ENCODE measurements at regions of chr2 and their contacts with region 1.

Region 1: DNA sequence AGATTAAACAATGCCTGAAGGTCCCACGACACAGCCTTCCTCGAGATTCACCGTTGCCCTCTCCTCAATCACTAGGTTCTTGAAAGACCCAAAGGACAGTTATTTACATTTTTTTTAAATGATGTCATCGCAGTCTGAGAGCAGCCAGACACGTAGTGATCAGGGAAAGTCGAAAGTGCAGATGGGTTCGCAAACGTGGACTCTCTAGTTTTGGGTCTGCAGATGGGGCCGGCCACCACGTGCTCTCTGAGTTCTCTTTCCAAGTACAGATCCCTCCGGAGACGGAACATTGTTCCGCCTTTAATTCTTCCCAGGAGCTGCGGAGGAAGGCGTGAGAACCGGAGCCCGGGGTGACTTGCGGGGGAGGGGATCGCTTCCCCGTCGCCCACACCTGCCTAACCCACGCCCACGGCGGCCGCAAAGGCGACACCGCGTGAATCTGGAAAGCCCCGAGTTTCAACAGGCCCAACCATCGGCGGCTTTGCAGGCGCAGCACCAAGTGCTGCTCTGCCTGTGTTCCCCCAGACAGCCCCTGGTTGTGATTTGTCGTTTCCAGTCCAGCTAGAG is 54.3 kb downstream of the PKDCC start:
- DNase-seq: peak; percentile 84 to 99 (median 96)
- ATAC-seq: peak; percentile 74 to 81
- H3K4me3 Mint-ChIP-seq: peak overlapping the region; percentile 77 to 90 (median 85)
- H3K27ac Mint-ChIP-seq: peak overlapping the region in 1 of 10 donors; percentile 99
- H3K4me1 Mint-ChIP-seq: peaks cover 38 to 70% (median 45%) of the 10 kb centered on the region in 4 donors
- H3K27me3 Mint-ChIP-seq: no peaks in the 10 kb centered on the region

Region 2: DNA sequence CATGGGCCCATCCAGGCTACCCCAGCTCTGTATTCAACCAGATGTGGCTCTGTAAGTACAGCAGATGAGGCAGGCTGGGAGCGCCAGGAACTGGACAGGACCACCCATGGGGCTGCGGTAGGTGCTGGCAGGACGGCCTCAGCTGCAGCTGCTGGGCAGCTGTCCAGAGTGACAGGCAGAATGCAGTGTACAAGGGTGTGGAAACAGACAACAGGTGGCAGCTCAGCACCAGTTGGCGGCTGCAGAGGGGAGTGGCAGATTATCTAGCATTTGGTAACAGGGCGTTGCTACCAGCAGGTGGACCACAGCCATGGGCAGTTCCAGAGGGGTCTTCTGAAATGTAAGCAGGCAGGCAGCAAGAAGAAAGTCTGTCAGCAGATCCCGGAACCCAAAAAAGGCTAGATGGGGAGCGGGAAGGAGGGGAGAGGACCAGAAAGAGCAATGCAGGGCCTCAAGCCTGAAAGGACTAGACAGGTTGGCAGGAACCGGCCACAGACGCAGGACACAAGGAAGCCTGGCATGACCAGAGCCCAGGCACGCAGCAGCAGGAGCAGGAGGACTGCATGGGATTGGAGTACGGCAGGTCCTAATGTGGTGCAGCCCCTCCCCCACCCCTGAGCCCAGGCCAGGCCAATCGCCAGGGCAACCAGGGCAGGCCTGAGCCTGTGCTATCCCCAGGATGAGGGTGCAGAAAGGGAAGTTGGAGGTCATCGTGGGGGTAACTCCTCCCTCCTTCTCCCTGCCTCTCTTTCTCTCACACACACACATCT is 29.6 kb before region 1 on chr2:
- POLR2A ChIA-PET with region 1: no interaction called
- DNase-seq: no peak
- ATAC-seq: no peak
- H3K4me3 Mint-ChIP-seq: no peak overlapping the region
- H3K27ac Mint-ChIP-seq: no peak overlapping the region
- H3K4me1 Mint-ChIP-seq: no peaks in the 10 kb centered on the region
- H3K27me3 Mint-ChIP-seq: peaks cover 5 to 56% (median 31%) of the 10 kb centered on the region in 5 donors

Region 3: DNA sequence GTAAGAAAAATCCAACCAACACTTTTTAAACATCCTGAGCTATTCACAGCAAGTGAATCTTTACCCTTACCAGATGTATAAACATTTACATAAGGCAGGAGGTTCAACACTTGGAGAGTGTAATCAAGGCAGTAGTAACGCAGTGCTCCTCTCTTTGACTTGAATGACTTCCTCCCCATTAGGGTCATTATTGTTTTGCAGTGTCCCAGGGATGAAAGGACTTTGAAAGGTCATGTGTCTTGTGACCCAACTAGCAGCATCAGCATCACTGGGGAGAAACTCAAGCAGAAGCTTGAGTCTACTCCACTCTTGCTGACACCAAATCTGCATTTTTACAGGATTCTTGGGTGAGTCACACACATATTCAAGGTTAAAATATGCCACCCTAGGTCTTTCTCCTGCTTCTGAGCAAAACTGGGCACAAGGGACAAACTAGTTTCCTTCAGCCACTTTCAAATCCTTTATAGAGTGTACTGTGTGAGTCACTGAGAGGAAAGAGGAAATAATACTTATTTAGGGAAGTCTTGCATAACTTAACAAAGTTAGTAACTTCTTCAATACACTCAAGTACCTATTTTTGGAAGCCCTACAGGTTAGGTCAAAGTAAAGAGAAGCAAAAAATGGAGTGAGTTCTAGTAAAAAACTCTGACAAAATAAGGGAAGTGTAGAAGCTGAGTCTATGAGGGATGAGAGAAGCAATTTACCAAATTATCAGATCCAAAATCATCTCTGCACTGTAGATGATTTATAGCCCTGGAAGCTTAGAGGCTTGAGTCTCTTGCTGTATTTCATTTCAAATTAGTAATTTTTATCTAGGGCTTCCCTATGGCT is 16.0 kb after region 1 on chr2:
- POLR2A ChIA-PET with region 1: interaction called, 149 read pairs
- DNase-seq: no peak
- ATAC-seq: peak; percentile 33 to 83
- H3K4me3 Mint-ChIP-seq: peak overlapping the region in 6 of 10 donors; percentile 3 to 26 (median 10)
- H3K27ac Mint-ChIP-seq: peak overlapping the region in 8 of 10 donors; percentile 13 to 91 (median 75)
- H3K4me1 Mint-ChIP-seq: peaks cover 17 to 75% (median 50%) of the 10 kb centered on the region in 4 donors
- H3K27me3 Mint-ChIP-seq: no peaks in the 10 kb centered on the region

Region 4: GRCh38 chr2:42127425-42128424 is 25.6 kb after region 1 on chr2:
- POLR2A ChIA-PET with region 1: interaction called, 149 read pairs
- DNase-seq: peak in 5 of 10 donors; percentile 42 to 74 (median 73)
- ATAC-seq: peak; percentile 62 to 66
- H3K4me3 Mint-ChIP-seq: peak overlapping the region; percentile 43 to 88 (median 73)
- H3K27ac Mint-ChIP-seq: peak overlapping the region; percentile 91 to 96 (median 94)
- H3K4me1 Mint-ChIP-seq: peaks cover 50 to 96% (median 94%) of the 10 kb centered on the region in 4 donors
- H3K27me3 Mint-ChIP-seq: no peaks in the 10 kb centered on the region

Region 5: DNA sequence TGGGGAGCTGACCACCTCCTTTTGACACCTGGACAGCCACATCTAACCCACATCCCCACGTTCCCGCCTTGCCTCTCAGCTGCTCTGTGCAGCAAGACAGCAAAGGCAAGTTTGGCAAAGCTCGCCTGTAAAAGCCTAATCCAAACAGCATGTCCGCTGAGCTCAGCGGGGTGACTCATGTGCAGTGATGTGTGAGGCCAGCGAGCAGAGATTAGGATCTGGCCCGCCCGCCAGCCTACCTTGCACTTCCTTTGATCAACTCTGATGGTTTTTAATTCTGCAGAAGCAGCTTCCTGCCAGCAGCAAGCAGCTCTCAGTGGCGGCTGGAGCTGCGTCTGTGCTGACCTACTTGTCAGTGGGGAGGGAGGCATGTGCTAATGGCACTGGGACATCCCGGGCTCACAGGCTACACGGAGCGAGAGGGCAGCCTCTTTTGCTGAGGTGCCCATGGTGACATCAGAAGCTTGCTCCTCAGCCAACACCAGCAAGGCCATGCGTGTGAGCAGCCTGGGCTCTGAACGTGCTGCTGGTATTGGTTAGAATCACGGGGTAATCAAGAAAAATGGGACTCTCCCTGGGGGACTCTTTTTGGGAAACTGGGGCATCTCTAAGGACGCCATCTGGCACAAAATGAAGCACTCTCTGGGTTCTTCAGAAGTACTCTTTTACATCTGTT is 31.0 kb after region 1 on chr2:
- POLR2A ChIA-PET with region 1: interaction called, 149 read pairs
- DNase-seq: peak; percentile 67 to 94 (median 85)
- ATAC-seq: peak; percentile 87 to 91
- H3K4me3 Mint-ChIP-seq: peak overlapping the region; percentile 62 to 84 (median 75)
- H3K27ac Mint-ChIP-seq: peak overlapping the region; percentile 90 to 98 (median 96)
- H3K4me1 Mint-ChIP-seq: peaks cover 46 to 96% (median 91%) of the 10 kb centered on the region in 4 donors
- H3K27me3 Mint-ChIP-seq: no peaks in the 10 kb centered on the region

Region 6: GRCh38 chr2:42140501-42140900 is 38.4 kb after region 1 on chr2:
- POLR2A ChIA-PET with region 1: interaction called, 72 read pairs
- DNase-seq: no peak
- ATAC-seq: no peak
- H3K4me3 Mint-ChIP-seq: no peak overlapping the region
- H3K27ac Mint-ChIP-seq: peak overlapping the region in 2 of 10 donors; percentile 48 to 73
- H3K4me1 Mint-ChIP-seq: peaks cover 17 to 71% (median 65%) of the 10 kb centered on the region in 4 donors
- H3K27me3 Mint-ChIP-seq: no peaks in the 10 kb centered on the region

Region 7: DNA sequence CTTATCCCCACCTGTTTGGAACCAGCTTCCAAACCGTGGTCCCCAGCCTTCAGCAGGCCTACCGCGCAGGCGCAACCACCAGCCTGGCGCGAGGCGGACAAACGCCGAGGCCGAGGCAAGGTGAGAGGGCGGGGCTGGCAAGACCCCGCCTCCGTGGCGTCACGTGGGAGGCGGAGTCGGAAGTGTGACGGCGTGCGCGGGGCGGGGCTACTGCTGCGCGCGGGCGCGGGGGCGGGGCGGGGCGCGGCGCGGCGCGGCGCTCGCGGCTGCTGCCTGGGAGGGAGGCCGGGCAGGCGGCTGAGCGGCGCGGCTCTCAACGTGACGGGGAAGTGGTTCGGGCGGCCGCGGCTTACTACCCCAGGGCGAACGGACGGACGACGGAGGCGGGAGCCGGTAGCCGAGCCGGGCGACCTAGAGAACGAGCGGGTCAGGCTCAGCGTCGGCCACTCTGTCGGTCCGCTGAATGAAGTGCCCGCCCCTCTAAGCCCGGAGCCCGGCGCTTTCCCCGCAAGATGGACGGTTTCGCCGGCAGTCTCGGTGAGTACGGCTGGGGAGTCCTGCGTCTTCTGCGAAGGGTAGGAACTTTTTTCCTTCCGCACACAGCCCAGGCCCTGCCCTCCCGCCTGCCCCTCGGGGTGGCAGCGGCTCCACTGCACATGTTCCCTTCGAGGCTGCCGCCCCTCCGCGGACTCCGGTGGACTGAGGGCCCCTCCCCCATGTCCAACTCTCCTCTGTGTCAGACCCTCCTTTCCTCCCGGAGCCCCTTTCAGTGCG is 67.2 kb after region 1 on chr2 and contains the start of gene EML4:
- POLR2A ChIA-PET with region 1: interaction called, 39 read pairs
- DNase-seq: peak; percentile 79 to 95 (median 90)
- ATAC-seq: peak; percentile 87
- H3K4me3 Mint-ChIP-seq: peak within 1 kb of the TSS in 2 of 10 donors; percentile 53 to 70
- H3K27ac Mint-ChIP-seq: peak within 1 kb of the TSS in 2 of 10 donors; percentile 91
- H3K4me1 Mint-ChIP-seq: peaks cover 7 to 24% (median 15%) of the 10 kb centered on the region in 4 donors
- H3K27me3 Mint-ChIP-seq: no peaks in the 10 kb centered on the region
- polyA plus RNA-seq, gene EML4: 37.8 to 48.1 (median 44.7) TPM

Region 8: GRCh38 chr2:42186221-42186765 is 84.2 kb after region 1 on chr2:
- POLR2A ChIA-PET with region 1: interaction called, 11 read pairs
- DNase-seq: no peak
- ATAC-seq: no peak
- H3K4me3 Mint-ChIP-seq: peak overlapping the region in 1 of 10 donors; percentile 19
- H3K27ac Mint-ChIP-seq: peak overlapping the region in 3 of 10 donors; percentile 9 to 68 (median 22)
- H3K4me1 Mint-ChIP-seq: peaks cover 31 to 88% (median 66%) of the 10 kb centered on the region in 4 donors
- H3K27me3 Mint-ChIP-seq: no peaks in the 10 kb centered on the region

Region 9: DNA sequence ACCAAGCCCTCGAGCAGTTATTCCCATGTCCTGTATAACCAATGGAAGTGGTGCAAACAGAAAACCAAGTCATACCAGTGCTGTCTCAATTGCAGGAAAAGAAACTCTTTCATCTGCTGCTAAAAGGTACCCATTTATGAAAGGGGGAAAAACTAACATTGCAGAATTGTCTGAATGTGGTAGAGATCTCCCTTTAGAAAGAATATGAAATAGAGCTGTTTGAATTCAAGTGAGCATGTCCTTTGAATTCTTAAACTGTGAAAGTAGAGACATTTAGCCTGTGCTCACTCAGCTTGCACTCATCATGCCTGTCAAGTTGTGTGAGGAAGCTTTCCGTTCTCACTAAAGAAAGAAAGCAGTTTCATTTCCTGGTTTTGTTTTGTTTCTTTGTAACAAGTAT is 154.4 kb after region 1 on chr2:
- POLR2A ChIA-PET with region 1: no interaction called
- DNase-seq: peak in 2 of 10 donors; percentile 5 to 10
- ATAC-seq: peak in 1 of 2 donors; percentile 27
- H3K4me3 Mint-ChIP-seq: peak overlapping the region in 7 of 10 donors; percentile 9 to 57 (median 29)
- H3K27ac Mint-ChIP-seq: peak overlapping the region in 8 of 10 donors; percentile 2 to 85 (median 44)
- H3K4me1 Mint-ChIP-seq: peaks cover 16 to 55% (median 45%) of the 10 kb centered on the region in 4 donors
- H3K27me3 Mint-ChIP-seq: no peaks in the 10 kb centered on the region